ENCODE measurements at regions of chr1 and their contacts with region 1.

Region 1: DNA sequence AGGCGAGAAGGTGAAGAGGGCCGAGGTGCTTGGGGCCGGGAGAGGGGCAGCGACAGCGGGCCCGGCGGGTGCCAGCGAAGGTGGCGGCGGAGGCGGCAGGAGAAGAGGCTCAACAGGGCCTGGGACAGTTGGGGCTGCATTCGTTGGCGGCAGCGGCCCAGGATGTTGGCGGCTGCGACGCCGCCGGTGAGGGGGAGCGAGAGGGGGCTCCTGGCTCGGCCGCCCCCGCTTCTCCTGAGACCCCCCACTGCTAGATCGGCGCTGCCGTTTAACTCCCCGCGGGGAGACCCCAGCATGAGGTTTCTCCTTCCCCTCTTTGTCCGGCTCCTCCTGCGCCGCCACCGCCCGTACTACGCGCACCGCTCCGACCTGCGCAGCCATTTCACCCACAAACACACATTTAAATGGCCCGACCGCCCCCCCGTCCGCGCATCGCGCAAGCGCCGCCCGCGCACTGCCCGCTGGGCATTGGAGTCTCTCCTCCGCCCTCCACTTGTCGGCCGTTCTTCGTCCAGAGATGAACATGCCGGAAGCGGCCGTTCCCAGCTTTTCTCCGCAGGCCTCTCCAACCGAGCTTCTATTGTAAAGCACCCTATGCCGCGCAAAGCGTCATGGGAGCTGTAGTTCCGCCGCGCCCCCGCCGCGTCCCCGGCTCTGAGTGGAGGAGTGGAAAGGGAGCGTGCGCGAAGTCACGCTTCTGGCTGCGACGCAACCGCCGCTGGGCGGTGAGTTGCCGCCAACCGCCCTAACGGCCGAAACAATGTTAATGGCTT is at the start of gene RSBN1:
- DNase-seq: peak; percentile 95
- ATAC-seq: peak; percentile 94
- H3K4me3 Mint-ChIP-seq: peak within 1 kb of the TSS; percentile 94
- H3K27ac Mint-ChIP-seq: peak within 1 kb of the TSS; percentile 93
- H3K4me1 Mint-ChIP-seq: peaks cover 41% of the 10 kb centered on the region
- H3K27me3 Mint-ChIP-seq: no peaks in the 10 kb centered on the region
- CTCF ChIP-seq: no peak
- total RNA-seq, gene RSBN1: 26.4 and 29.1 TPM in 2 replicates

Region 2: GRCh38 chr1:112715264-112716053 is 1096.6 kb before region 1 on chr1 and contains the start of gene PPM1J:
- CTCF ChIA-PET with region 1: no interaction called
- POLR2A ChIA-PET with region 1: no interaction called
- intact Hi-C with region 1: loop called (anchors 5 kb)
- DNase-seq: peak; percentile 99
- ATAC-seq: peak; percentile 88
- H3K4me3 Mint-ChIP-seq: peak within 1 kb of the TSS; percentile 84
- H3K27ac Mint-ChIP-seq: peak within 1 kb of the TSS; percentile 74
- H3K4me1 Mint-ChIP-seq: peaks cover 37% of the 10 kb centered on the region
- H3K27me3 Mint-ChIP-seq: peaks cover 5% of the 10 kb centered on the region
- CTCF ChIP-seq: no peak
- total RNA-seq, gene PPM1J: 0.46 and 0.75 TPM in 2 replicates

Region 3: GRCh38 chr1:113684153-113684541 is 127.9 kb before region 1 on chr1:
- CTCF ChIA-PET with region 1: no interaction called
- POLR2A ChIA-PET with region 1: no interaction called
- intact Hi-C with region 1: no loop called
- DNase-seq: no peak
- ATAC-seq: no peak
- H3K4me3 Mint-ChIP-seq: no peak overlapping the region
- H3K27ac Mint-ChIP-seq: no peak overlapping the region
- H3K4me1 Mint-ChIP-seq: no peaks in the 10 kb centered on the region
- H3K27me3 Mint-ChIP-seq: no peaks in the 10 kb centered on the region
- CTCF ChIP-seq: no peak

Region 4: DNA sequence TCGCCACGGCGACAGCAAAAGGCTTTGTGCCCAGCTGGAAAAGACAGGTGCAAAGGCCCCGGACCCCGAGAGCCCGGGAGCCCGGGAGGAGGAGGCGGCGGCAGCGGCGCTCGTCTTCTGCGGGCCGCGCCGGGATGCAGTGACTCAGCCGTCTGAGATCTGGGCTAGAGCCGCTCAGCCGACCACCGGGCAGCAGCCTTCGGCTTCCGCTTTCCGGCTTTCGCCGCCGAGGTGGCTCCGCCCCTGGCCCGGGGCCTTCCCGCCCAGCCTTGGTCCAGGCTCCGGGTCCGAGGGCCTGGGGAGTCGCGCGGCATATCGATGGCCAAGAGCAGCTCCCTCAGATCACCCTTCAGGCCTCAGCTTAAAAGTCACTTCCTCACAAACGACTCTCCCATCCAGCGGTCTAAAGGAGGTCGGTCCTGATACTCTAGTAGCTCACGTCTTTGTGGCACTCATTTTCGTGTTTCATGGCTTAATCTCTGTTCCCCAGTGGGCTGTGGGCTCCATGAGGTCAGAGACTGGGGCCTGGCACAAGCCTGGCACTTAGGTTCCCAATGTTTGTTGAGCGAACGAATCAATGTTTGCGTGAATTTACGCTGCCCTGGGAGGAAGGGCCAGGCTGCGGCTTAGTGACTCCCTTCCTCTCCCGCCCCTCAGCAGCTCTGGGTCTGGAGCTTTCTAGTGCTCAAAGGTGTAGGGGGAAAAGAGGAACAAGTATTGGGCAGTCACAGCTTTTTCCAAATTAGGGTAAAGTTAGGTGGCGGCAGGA is 52.6 kb before region 1 on chr1 and contains the start of gene PHTF1:
- CTCF ChIA-PET with region 1: interaction called, 4 read pairs
- POLR2A ChIA-PET with region 1: interaction called, 78 read pairs
- intact Hi-C with region 1: loop called (anchors 1 kb)
- DNase-seq: peak; percentile 73
- ATAC-seq: peak; percentile 88
- H3K4me3 Mint-ChIP-seq: peak within 1 kb of the TSS; percentile 94
- H3K27ac Mint-ChIP-seq: peak within 1 kb of the TSS; percentile 98
- H3K4me1 Mint-ChIP-seq: peaks cover 21% of the 10 kb centered on the region
- H3K27me3 Mint-ChIP-seq: no peaks in the 10 kb centered on the region
- CTCF ChIP-seq: no peak
- total RNA-seq, gene PHTF1: 19.2 and 25.0 TPM in 2 replicates

Region 5: GRCh38 chr1:113835642-113836307 is 23.7 kb after region 1 on chr1:
- CTCF ChIA-PET with region 1: interaction called, 5 read pairs
- POLR2A ChIA-PET with region 1: interaction called, 3 read pairs
- intact Hi-C with region 1: loop called (anchors 2 kb)
- DNase-seq: no peak
- ATAC-seq: no peak
- H3K4me3 Mint-ChIP-seq: no peak overlapping the region
- H3K27ac Mint-ChIP-seq: no peak overlapping the region
- H3K4me1 Mint-ChIP-seq: peaks cover 2% of the 10 kb centered on the region
- H3K27me3 Mint-ChIP-seq: no peaks in the 10 kb centered on the region
- CTCF ChIP-seq: peak; percentile 20

Region 6: DNA sequence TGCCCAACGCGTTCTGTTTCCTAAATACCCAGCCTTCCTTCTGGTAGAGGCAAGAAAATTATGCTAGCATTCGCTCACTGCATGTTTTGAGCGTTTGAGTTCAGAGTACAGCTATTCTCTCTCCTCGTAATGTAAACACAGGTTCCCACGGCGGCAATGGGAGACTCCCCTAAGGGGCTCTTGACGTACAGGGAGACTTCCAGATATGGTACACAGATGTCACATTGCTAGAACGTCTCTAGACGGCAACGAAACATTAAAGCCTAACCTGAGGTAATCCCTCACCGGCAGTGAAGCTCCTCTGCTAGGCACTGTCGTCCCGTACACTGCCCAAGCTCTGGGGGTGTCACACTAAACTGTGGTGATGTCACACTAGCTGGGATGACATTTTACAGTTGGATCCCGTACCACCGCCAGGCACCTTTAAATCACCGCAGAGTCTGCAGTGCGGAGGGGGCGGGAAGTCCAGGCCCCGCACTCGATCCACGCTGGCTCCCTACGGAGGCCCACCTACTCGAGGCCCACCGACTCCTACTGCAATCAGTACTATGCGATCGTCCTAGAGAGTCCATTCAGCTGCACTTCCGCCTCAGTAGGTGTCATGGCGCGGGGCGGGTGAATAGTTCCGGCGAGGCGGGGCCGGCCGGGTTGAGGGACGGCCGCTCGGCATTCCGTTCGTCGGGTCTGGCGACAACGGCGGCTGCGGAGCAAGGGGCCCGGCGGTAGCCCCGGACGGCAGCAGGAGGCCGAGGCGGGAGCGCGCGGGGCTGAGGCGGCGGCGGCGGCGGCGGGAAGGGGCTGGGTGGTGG is 117.1 kb after region 1 on chr1 and contains the start of gene HIPK1:
- CTCF ChIA-PET with region 1: no interaction called
- POLR2A ChIA-PET with region 1: interaction called, 28 read pairs
- intact Hi-C with region 1: loop called (anchors 1 kb)
- DNase-seq: peak; percentile 93
- ATAC-seq: peak; percentile 73
- H3K4me3 Mint-ChIP-seq: peak within 1 kb of the TSS; percentile 99
- H3K27ac Mint-ChIP-seq: peak within 1 kb of the TSS; percentile 99
- H3K4me1 Mint-ChIP-seq: peaks cover 50% of the 10 kb centered on the region
- H3K27me3 Mint-ChIP-seq: no peaks in the 10 kb centered on the region
- CTCF ChIP-seq: no peak
- total RNA-seq, gene HIPK1: 38.0 and 39.0 TPM in 2 replicates

Region 7: DNA sequence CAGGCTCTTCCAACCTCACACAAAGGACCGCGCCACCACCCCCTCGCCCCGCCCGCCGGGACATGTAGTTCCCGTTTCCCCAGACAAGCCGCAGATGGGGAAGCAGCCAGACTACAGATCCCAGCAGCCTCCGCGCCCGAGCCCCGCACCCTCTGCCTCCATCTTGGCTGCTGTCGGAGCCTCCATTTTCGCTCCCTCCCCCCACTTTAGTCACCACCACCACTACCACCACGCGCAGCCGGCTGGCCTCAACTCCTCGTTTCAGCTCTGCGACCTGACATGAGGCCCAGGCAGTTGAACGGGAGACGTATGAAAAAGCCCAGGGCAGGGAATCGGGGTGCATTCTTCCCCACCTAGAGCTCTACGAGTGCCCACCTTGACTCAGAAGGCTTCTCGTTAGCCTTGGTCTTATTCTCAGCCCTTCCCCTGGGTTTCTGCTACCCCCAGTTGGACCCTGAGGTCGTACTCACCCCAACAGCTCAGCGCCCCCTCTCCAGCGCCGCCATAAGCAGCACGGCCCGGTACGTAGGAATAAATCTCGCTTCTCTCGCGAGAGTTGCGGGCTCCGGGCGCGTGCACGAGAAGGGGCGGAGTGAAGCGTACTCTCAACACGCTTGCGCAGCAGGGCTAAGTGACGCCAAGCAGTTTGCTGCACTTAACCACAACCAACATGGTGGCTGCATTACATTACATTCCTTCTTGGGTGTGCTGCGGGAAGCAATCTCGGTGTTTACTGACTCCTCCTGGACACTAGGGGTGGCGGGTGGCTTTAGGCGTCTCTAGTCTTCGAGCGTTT is 945.6 kb after region 1 on chr1 and contains the start of gene CSDE1:
- CTCF ChIA-PET with region 1: no interaction called
- POLR2A ChIA-PET with region 1: no interaction called
- intact Hi-C with region 1: loop called (anchors 1 kb)
- DNase-seq: peak; percentile 92
- ATAC-seq: peak; percentile 90
- H3K4me3 Mint-ChIP-seq: peak within 1 kb of the TSS; percentile 100
- H3K27ac Mint-ChIP-seq: peak within 1 kb of the TSS; percentile 100
- H3K4me1 Mint-ChIP-seq: peaks cover 57% of the 10 kb centered on the region
- H3K27me3 Mint-ChIP-seq: no peaks in the 10 kb centered on the region
- CTCF ChIP-seq: no peak
- total RNA-seq, gene CSDE1: 416 and 424 TPM in 2 replicates

Measured in activated B cell treated with CpG ODN at 0.5 μM for 24 hours (primary cell).